Activated CD4-positive, alpha-beta T cell treated with anti-CD3 and anti-CD28 coated beads for 36 hours (primary cell): ENCODE measurements at regions of chr22 and their contacts with region 1.

Region 1: GRCh38 chr22:29072193-29072978 is 449 bp upstream of the KREMEN1 start:
- DNase-seq: peak; percentile 93
- ATAC-seq: peak; percentile 98
- H3K4me3 Mint-ChIP-seq: peak overlapping the region; percentile 66
- H3K27ac Mint-ChIP-seq: no peak overlapping the region
- H3K4me1 Mint-ChIP-seq: peaks cover 15% of the 10 kb centered on the region
- H3K27me3 Mint-ChIP-seq: peaks cover 51% of the 10 kb centered on the region

Region 2: GRCh38 chr22:28772633-28773460 is 299.5 kb before region 1 on chr22 and contains the start of gene CCDC117:
- CTCF ChIA-PET with region 1: no interaction called
- POLR2A ChIA-PET with region 1: no interaction called
- intact Hi-C with region 1: loop called in 1 of 2 experiments (anchors 1 kb)
- DNase-seq: peak; percentile 96
- ATAC-seq: peak; percentile 91
- H3K4me3 Mint-ChIP-seq: peak within 1 kb of the TSS; percentile 94
- H3K27ac Mint-ChIP-seq: peak within 1 kb of the TSS; percentile 99
- H3K4me1 Mint-ChIP-seq: peaks cover 19% of the 10 kb centered on the region
- H3K27me3 Mint-ChIP-seq: no peaks in the 10 kb centered on the region
- total RNA-seq, gene CCDC117: 36.1 to 36.8 TPM

Region 3: DNA sequence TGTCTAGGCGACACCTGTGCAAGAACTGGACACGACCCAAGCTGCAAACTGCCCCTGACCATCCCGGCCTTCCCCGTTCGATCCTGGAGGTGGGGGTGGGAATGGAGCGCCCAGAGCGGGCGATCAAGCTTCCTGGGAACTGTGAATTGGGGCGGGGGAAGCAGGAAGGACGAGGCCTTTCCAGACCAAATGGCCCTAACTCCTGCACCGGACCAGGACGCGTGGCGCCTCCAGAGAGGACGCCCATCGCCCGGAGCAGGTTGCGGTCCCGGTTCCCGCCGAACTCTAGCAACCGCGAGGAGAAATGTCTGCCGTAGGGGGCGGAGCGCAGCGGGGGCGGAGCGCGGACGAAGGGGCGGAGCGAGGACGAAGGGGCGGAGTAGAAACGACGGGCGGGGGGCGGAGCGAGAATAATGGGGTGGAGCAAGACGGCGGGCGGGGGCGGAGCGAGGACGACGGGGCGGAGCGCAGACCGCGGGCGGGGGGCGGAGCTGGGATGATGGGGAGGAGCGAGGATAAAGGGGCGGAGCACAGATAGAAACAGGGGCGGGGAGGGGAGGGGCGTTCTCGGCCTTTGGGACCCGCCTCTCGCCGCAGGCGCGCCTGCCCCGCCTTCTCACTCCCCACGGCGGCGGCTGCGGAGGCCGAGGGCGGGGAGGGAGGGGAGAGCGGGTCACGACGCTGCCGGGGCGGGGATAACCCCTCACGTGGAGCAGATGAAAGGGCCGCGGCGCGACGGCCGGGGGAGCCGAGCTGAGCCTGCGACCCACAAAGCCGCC is 189.3 kb before region 1 on chr22 and contains the start of gene ZNRF3:
- CTCF ChIA-PET with region 1: no interaction called
- POLR2A ChIA-PET with region 1: no interaction called
- intact Hi-C with region 1: loop called (anchors 1 kb)
- DNase-seq: peak; percentile 96
- ATAC-seq: peak; percentile 91
- H3K4me3 Mint-ChIP-seq: peak within 1 kb of the TSS; percentile 75
- H3K27ac Mint-ChIP-seq: peak within 1 kb of the TSS; percentile 83
- H3K4me1 Mint-ChIP-seq: peaks cover 18% of the 10 kb centered on the region
- H3K27me3 Mint-ChIP-seq: peaks cover 26% of the 10 kb centered on the region
- total RNA-seq, gene ZNRF3: 2.3 TPM

Region 4: GRCh38 chr22:29154364-29155048 is 82.1 kb after region 1 on chr22:
- CTCF ChIA-PET with region 1: interaction called, 3 read pairs
- POLR2A ChIA-PET with region 1: no interaction called
- intact Hi-C with region 1: loop called in 1 of 2 experiments (anchors 2 kb)
- DNase-seq: peak; percentile 88
- ATAC-seq: peak; percentile 86
- H3K4me3 Mint-ChIP-seq: no peak overlapping the region
- H3K27ac Mint-ChIP-seq: no peak overlapping the region
- H3K4me1 Mint-ChIP-seq: peaks cover 6% of the 10 kb centered on the region
- H3K27me3 Mint-ChIP-seq: peaks cover 18% of the 10 kb centered on the region